ENCODE measurements at regions of chr1 and their contacts with region 1.

Region 1: DNA sequence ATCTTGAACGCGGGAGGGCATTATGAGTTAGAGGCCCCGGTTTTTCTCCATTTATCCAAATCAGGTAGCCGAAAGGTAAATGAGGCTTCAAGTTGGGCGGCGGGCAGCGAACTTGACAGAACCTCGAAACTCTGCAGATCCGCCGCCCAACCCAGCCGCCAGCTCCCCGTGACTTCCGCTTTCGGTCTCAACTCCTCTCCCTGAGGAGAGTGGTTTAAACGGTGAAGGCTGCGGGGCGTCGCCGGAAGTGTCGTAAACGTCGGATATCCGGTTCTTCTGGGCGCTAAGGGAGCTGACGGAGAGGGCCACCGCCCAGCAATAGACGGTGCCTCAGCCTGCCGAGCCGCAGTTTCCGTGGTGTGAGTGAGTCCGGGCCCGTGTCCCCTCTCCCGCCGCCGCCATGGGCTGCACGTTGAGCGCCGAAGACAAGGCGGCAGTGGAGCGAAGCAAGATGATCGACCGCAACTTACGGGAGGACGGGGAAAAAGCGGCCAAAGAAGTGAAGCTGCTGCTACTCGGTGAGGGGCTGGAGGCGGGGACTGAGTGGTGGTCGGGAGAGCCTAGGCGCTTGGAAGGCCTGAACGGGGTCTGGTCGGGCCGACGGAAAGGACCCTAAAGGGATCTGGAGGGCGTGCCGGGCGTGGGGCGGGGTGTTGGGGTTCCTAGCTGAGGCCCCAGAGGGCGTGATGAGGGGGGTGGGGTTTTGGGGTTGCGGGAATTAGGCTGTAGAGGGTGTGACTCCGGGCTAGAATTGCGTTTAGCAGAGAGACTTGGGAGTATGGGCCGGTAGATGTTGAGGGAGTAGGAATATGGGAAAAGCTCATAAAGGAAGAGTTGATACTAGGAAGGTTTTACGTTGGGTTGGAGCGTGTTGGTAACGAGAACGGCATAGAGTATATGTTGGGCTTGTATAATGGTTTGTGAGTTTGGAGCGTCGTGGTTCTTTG is at the start of gene GNAI3:
- DNase-seq: peak; percentile 98
- H3K4me3 Mint-ChIP-seq: peak within 1 kb of the TSS; percentile 86
- H3K27ac Mint-ChIP-seq: peak within 1 kb of the TSS; percentile 94
- H3K4me1 Mint-ChIP-seq: peaks cover 41% of the 10 kb centered on the region
- H3K27me3 Mint-ChIP-seq: no peaks in the 10 kb centered on the region
- total RNA-seq, gene GNAI3: 9.2 to 9.9 TPM

Region 2: DNA sequence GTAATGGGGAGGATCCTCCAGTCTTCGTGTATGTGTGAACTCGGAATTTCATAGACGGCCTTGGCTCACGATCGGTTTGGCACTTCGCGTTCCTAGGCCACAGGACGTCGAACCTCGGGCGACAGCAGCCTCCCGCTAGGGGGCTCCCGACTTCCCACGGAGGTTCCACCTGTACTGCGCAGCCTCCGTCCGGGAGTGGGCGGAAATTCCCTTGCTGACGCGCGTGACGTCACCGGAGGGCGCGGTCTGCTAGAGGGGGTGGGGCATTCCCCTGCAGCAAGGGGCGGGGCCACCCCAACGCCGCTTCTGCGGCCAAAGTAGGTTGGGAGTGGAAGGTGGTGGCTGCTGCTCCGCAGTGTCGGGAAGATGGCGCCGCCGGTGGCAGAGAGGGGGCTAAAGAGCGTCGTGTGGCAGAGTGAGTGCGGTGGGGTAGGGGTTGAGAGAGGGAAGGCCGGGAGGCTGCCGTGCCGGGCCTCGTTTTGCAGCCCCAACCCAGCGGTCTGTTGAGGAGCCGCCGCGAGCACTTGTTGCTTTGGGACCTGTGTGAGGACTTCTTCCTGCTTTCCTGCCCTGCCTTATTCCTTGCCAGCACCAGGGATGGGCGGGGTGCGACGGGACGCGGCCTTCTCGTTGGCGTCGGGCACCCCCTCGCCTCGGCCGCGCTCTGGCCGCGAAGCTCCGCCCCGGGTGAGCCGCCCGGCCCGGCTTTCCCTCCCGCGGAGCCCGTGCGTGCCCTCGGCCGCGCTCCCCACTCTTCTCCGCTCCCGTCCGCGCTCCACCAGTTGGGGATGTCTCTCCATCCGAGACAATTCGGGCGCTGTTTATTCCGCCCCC is 802.0 kb before region 1 on chr1 and contains the start of gene STXBP3:
- CTCF ChIA-PET with region 1: no interaction called
- POLR2A ChIA-PET with region 1: no interaction called
- intact Hi-C with region 1: loop called (anchors 5 kb)
- DNase-seq: peak; percentile 100
- H3K4me3 Mint-ChIP-seq: peak within 1 kb of the TSS; percentile 95
- H3K27ac Mint-ChIP-seq: peak within 1 kb of the TSS; percentile 97
- H3K4me1 Mint-ChIP-seq: peaks cover 28% of the 10 kb centered on the region
- H3K27me3 Mint-ChIP-seq: no peaks in the 10 kb centered on the region
- total RNA-seq, gene STXBP3: 40.8 to 46.8 TPM

Region 3: DNA sequence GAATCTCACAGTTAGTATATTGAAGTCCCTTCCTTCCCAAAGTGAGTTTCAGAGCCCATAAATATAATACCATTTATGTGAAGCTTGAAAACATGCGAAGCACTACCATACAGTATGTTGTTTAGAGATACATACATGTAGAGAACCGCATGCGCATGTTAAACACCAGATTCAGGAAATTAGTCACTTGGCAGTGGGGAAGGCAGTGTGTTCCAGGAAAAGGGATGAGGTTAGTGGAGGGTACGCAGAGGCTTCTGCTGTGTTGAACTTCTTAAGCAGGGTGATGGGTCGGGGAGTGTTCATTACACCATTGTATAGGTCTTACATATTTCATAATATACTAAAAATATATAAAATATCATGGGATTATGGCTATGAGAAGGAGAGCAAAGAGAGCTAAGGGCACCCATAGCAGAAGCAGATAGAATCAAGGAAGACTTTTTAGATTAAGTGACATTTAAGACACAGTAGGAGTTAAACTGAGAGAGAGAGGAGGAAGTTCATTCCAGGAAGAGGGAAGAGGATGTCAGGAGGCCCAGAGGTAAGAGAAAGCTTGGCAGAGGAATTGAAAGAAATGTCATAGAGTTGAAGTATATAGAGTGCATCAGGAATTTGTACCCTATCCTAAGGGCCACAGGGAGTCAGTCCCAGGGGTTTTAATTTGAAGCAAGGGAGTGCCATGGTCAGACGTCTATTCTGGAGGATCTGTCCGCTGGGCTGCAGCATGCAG is 378.4 kb before region 1 on chr1:
- CTCF ChIA-PET with region 1: no interaction called
- POLR2A ChIA-PET with region 1: no interaction called
- intact Hi-C with region 1: no loop called
- DNase-seq: no peak
- H3K4me3 Mint-ChIP-seq: no peak overlapping the region
- H3K27ac Mint-ChIP-seq: no peak overlapping the region
- H3K4me1 Mint-ChIP-seq: peaks cover 3% of the 10 kb centered on the region
- H3K27me3 Mint-ChIP-seq: no peaks in the 10 kb centered on the region

Region 4: GRCh38 chr1:109493805-109494539 is 54.6 kb before region 1 on chr1 and contains the start of gene CYB561D1:
- CTCF ChIA-PET with region 1: interaction called, 21 read pairs
- POLR2A ChIA-PET with region 1: interaction called, 4 read pairs
- intact Hi-C with region 1: no loop called
- DNase-seq: peak; percentile 93
- H3K4me3 Mint-ChIP-seq: peak within 1 kb of the TSS; percentile 89
- H3K27ac Mint-ChIP-seq: peak within 1 kb of the TSS; percentile 78
- H3K4me1 Mint-ChIP-seq: peaks cover 44% of the 10 kb centered on the region
- H3K27me3 Mint-ChIP-seq: no peaks in the 10 kb centered on the region
- total RNA-seq, gene CYB561D1: 6.6 to 8.7 TPM

Region 5: DNA sequence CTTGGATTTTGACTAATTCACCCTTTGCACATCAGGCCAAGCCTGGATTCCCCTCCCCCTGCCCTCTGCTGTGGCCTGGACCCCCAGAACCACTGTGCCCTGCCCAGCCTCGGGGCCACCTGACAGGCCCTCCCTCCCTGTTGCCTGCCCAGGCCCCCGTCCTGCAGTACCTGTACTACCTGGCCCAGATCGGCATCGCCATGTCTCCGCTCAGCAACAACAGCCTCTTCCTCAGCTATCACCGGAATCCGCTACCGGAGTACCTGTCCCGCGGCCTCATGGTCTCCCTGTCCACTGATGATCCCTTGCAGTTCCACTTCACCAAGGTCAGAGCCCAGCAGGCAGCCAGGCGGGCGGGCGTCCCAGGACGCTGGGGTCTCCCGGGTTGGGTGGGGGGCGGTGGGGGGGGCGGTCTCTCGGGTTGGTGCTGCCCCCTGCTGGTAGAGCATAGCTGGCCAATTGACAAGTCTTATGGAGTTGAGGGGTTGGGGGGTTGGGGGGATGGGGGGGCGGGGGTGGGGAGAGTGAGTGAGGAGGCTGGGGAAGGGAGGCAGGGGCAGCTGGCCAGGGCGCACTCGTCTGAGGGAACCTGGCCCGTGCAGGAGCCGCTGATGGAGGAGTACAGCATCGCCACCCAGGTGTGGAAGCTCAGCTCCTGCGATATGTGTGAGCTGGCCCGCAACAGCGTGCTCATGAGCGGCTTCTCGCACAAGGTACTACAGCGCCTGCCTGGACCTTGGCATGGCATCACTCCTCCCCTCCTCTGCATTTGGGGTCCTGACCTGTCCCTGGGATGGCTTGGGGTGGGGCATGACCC is 81.7 kb after region 1 on chr1:
- CTCF ChIA-PET with region 1: interaction called, 130 read pairs
- POLR2A ChIA-PET with region 1: interaction called, 5 read pairs
- intact Hi-C with region 1: loop called (anchors 1 kb)
- DNase-seq: peak; percentile 51
- H3K4me3 Mint-ChIP-seq: no peak overlapping the region
- H3K27ac Mint-ChIP-seq: no peak overlapping the region
- H3K4me1 Mint-ChIP-seq: peaks cover 12% of the 10 kb centered on the region
- H3K27me3 Mint-ChIP-seq: no peaks in the 10 kb centered on the region

Region 6: DNA sequence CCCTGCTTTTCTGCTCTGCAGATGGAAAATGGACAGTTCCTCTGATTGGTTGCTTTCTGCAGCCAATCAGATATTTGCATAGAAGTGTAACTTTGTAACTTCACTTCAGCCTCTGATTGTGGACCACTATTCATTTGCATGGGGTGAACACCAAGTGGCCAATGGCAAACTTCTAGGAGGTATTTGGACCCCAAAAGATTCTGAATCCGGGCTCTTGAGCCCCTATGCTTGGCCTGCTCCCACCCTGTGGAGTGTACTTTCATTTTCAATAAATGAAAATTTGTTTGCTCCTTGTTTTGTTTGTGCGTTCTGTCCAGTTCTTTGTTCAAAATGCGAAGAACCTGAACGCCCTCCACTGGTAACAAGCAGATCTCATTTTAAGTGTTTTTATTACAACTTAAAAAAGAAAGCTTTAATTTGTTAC is 100.9 kb after region 1 on chr1:
- CTCF ChIA-PET with region 1: interaction called, 12 read pairs
- POLR2A ChIA-PET with region 1: no interaction called
- intact Hi-C with region 1: no loop called
- DNase-seq: no peak
- H3K4me3 Mint-ChIP-seq: no peak overlapping the region
- H3K27ac Mint-ChIP-seq: no peak overlapping the region
- H3K4me1 Mint-ChIP-seq: no peaks in the 10 kb centered on the region
- H3K27me3 Mint-ChIP-seq: peaks cover 9% of the 10 kb centered on the region

Region 7: DNA sequence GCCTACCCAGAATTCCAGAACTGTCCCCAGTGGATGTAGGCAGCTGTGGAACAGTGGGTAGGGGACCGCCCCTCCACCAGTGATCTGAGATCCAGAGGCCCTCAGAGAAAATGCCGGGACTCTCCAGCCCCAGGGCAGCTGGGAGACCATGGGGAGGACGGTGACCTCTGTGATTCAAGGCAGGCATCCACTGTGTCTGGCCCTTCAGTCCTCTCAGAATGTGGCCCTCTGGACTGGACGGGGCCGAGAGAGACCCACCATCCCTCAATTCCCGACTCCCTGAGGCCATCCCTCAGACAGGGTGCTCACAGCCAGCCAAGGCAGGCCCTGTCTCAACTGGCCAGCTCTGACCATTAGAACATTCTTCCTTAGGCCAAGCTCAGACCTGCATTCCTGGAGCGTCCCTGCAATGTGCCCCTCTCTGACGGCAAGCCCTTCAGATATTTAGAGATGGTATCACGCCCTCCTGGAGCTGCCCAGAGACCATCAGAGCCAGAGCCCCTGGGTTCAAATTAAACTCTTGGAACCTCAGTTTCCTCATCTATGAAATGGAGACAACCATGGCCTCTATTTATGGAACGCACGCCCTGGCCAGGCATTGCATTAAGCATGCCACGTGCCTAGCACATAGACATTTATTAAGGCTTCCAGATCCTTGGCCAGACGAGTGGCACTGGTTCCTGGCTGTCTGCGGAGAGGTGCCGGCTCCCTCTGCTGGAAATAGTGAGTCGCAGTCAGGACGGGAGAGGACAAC is 224.7 kb after region 1 on chr1:
- CTCF ChIA-PET with region 1: interaction called, 66 read pairs
- POLR2A ChIA-PET with region 1: interaction called, 4 read pairs
- intact Hi-C with region 1: loop called (anchors 1 kb)
- DNase-seq: peak; percentile 83
- H3K4me3 Mint-ChIP-seq: no peak overlapping the region
- H3K27ac Mint-ChIP-seq: no peak overlapping the region
- H3K4me1 Mint-ChIP-seq: peaks cover 4% of the 10 kb centered on the region
- H3K27me3 Mint-ChIP-seq: no peaks in the 10 kb centered on the region

Measured in activated CD4-positive, alpha-beta memory T cell treated with anti-CD3 and anti-CD28 coated beads for 36 hours (primary cell).